ENCODE measurements at regions of chr3 and their contacts with region 1.

Region 1: GRCh38 chr3:143165211-143165610 is 45.6 kb downstream of the CHST2 start:
- DNase-seq: no peak
- H3K4me3 Mint-ChIP-seq: no peak overlapping the region
- H3K27ac Mint-ChIP-seq: peak overlapping the region; percentile 88
- H3K4me1 Mint-ChIP-seq: peaks cover 73% of the 10 kb centered on the region
- H3K27me3 Mint-ChIP-seq: no peaks in the 10 kb centered on the region

Region 2: GRCh38 chr3:142498397-142499180 is 666.6 kb before region 1 on chr3:
- CTCF ChIA-PET with region 1: no interaction called
- intact Hi-C with region 1: loop called (anchors 2 kb)
- DNase-seq: no peak
- H3K4me3 Mint-ChIP-seq: peak overlapping the region; percentile 15
- H3K27ac Mint-ChIP-seq: peak overlapping the region; percentile 80
- H3K4me1 Mint-ChIP-seq: peaks cover 35% of the 10 kb centered on the region
- H3K27me3 Mint-ChIP-seq: no peaks in the 10 kb centered on the region

Region 3: GRCh38 chr3:143081844-143082778 is 83.1 kb before region 1 on chr3:
- CTCF ChIA-PET with region 1: no interaction called
- intact Hi-C with region 1: loop called (anchors 1 kb)
- DNase-seq: peak; percentile 51
- H3K4me3 Mint-ChIP-seq: peak overlapping the region; percentile 41
- H3K27ac Mint-ChIP-seq: peak overlapping the region; percentile 86
- H3K4me1 Mint-ChIP-seq: peaks cover 23% of the 10 kb centered on the region
- H3K27me3 Mint-ChIP-seq: no peaks in the 10 kb centered on the region

Region 4: DNA sequence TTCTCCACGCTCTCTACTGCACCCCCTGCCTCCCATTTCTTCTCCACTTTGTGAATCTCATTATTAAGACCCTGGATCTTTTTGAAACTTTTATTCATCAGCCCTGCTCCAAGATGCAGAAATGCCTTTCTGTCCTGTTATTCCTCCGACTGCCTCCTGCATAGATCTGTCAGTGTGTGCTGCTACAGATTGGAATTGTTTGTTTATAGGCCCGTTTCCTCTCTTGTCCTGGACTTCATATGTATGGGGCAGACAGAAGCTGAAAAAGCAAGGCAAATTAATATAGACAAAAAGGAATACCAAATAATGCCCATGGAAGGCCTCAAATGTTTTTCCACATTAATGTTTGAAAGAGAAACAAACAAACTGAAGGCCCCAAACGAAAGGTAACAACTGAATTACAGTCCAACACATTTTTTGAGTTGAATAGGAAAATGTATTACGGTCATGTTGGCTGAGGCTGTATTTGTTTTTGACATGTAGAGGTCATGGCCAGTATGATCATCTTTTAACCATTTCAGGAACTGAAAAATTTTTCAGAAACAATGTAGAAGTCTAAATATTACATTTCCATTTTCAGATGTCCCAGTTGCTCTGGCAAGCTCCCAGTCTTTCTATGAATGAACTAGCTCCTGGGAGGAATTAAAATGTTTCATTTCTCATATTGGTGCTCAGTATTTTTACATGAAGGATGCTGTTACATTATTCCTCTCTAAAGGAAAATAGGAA is 36.8 kb before region 1 on chr3:
- CTCF ChIA-PET with region 1: no interaction called
- intact Hi-C with region 1: no loop called
- DNase-seq: no peak
- H3K4me3 Mint-ChIP-seq: no peak overlapping the region
- H3K27ac Mint-ChIP-seq: no peak overlapping the region
- H3K4me1 Mint-ChIP-seq: peaks cover 28% of the 10 kb centered on the region
- H3K27me3 Mint-ChIP-seq: no peaks in the 10 kb centered on the region

Region 5: GRCh38 chr3:143276592-143276991 is 111.4 kb after region 1 on chr3:
- CTCF ChIA-PET with region 1: no interaction called
- intact Hi-C with region 1: loop called (anchors 2 kb)
- DNase-seq: no peak
- H3K4me3 Mint-ChIP-seq: no peak overlapping the region
- H3K27ac Mint-ChIP-seq: no peak overlapping the region
- H3K4me1 Mint-ChIP-seq: peaks cover 17% of the 10 kb centered on the region
- H3K27me3 Mint-ChIP-seq: no peaks in the 10 kb centered on the region

Region 6: GRCh38 chr3:143535994-143536784 is 371.0 kb after region 1 on chr3:
- CTCF ChIA-PET with region 1: no interaction called
- intact Hi-C with region 1: loop called (anchors 2 kb)
- DNase-seq: no peak
- H3K4me3 Mint-ChIP-seq: no peak overlapping the region
- H3K27ac Mint-ChIP-seq: no peak overlapping the region
- H3K4me1 Mint-ChIP-seq: peaks cover 21% of the 10 kb centered on the region
- H3K27me3 Mint-ChIP-seq: no peaks in the 10 kb centered on the region